Heart right ventricle (tissue), 16 donors: ENCODE measurements at regions of chr17 and their contacts with region 1.

Region 1: GRCh38 chr17:82320956-82321927 is 3.8 kb upstream of the CD7 start:
- DNase-seq: peak in 1 of 2 donors; percentile 56
- ATAC-seq: peak in 7 of 8 donors; percentile 10 to 58 (median 50)
- H3K4me3 ChIP-seq: peak overlapping the region in 2 of 10 donors; percentile 25 to 28
- H3K27ac ChIP-seq: peak overlapping the region in 1 of 10 donors; percentile 14
- H3K4me1 ChIP-seq: peaks cover 0 to 12% (median 4%) of the 10 kb centered on the region in 9 donors
- H3K27me3 ChIP-seq: peaks cover 0 to 21% (median 11%) of the 10 kb centered on the region in 7 donors
- CTCF ChIP-seq: peak; percentile 80 to 96 (median 89)

Region 2: DNA sequence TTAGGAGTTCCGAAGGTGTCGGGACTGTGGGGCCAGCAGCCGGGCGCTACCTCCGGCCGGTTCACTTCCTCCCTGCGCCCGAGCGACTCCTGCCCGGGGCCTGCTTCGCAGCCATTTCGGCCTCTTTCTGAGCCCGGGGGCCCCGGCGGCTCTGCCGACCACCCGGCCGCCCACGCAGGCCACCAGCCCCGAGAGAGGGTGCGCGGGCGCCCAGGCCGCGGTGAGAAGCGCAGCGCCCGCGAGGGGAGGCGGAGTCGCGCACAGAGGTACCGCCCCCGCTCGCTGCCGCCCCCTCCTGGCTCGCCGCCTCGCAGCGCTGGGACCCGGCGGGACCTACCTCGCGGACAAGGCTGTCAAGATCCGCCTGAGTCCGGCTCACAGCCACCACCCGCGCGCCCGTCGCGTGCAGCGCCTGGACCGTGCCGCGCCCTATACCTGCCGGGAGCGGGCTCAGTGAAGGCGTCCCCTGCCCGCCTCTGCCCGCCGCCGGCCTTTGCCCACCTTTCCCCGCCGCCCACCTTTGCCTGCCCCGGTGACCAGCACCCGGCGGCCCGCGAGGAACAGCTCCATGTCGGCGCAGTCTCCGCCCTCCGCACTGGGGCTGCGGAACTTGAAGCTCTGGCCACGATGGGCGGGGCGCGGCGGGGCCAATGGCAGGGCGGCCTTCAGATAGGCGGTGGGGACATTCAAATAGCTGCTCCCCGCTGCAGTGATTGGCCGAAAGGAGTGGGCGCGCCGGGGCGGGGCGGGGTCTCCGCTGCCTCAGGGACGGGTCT is 283.9 kb before region 1 on chr17 and contains the start of gene DCXR:
- intact Hi-C with region 1: loop called in 1 of 10 experiments (anchors 10 kb)
- DNase-seq: peak; percentile 97 to 98
- ATAC-seq: peak; percentile 95 to 99 (median 98)
- H3K4me3 ChIP-seq: peak within 1 kb of the TSS; percentile 58 to 82 (median 72)
- H3K27ac ChIP-seq: peak within 1 kb of the TSS; percentile 90 to 97 (median 94)
- H3K4me1 ChIP-seq: peaks cover 4 to 24% (median 18%) of the 10 kb centered on the region in 9 donors
- H3K27me3 ChIP-seq: peaks cover 0 to 5% (median 2%) of the 10 kb centered on the region in 7 donors
- CTCF ChIP-seq: peak; percentile 68 to 94 (median 86)
- total RNA-seq, gene DCXR: 155 to 258 (median 187) TPM

Region 3: GRCh38 chr17:82205719-82206508 is 115.3 kb before region 1 on chr17:
- intact Hi-C with region 1: loop called in 9 of 10 experiments (anchors 1 to 5 kb)
- DNase-seq: peak; percentile 80 to 81
- ATAC-seq: peak; percentile 68 to 90 (median 86)
- H3K4me3 ChIP-seq: peak overlapping the region in 6 of 10 donors; percentile 3 to 27 (median 13)
- H3K27ac ChIP-seq: peak overlapping the region in 8 of 10 donors; percentile 48 to 84 (median 72)
- H3K4me1 ChIP-seq: peaks cover 0 to 27% (median 11%) of the 10 kb centered on the region in 9 donors
- H3K27me3 ChIP-seq: no peaks in the 10 kb centered on the region
- CTCF ChIP-seq: peak; percentile 80 to 98 (median 92)

Region 4: DNA sequence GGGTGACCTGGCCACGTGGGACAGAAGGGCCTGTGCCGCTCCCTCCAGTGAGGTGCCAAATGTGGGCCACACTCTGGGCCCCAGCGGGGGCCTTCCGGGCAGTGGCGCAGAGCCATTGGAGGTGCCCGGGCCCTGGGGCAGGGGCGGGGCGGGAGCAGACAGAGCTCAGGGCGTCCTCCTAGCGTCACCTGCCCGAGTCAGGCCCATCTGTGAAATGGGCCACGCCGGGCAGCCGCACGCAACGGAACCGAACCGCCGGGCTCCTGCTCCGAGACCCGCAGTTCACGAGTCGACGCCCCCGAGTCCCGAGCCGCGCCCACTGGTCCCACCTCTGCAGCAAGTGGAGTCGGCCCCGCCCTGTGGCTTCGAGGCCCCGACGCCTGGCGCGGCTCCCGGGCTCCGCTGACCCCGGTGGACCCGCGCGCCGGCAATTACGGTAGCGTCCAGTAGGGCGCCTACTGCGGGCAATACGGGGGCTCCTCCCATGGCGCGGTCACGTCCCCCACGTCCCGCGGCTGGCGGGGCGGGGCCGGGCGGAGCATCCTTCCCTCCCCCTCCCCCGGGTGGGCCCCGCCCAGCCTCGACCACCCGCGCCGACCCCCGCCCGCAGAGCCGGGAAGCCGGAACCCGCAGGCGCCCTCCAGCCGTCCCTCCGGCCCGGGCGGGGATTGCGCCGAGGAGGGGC is 90.5 kb before region 1 on chr17:
- intact Hi-C with region 1: loop called in 7 of 10 experiments (anchors 5 to 10 kb)
- DNase-seq: peak; percentile 88 to 92
- ATAC-seq: peak; percentile 65 to 77 (median 74)
- H3K4me3 ChIP-seq: peak overlapping the region; percentile 46 to 88 (median 73)
- H3K27ac ChIP-seq: peak overlapping the region; percentile 85 to 100 (median 97)
- H3K4me1 ChIP-seq: peaks cover 16 to 83% (median 52%) of the 10 kb centered on the region in 9 donors
- H3K27me3 ChIP-seq: no peaks in the 10 kb centered on the region
- CTCF ChIP-seq: peak; percentile 47 to 77 (median 62)

Region 5: DNA sequence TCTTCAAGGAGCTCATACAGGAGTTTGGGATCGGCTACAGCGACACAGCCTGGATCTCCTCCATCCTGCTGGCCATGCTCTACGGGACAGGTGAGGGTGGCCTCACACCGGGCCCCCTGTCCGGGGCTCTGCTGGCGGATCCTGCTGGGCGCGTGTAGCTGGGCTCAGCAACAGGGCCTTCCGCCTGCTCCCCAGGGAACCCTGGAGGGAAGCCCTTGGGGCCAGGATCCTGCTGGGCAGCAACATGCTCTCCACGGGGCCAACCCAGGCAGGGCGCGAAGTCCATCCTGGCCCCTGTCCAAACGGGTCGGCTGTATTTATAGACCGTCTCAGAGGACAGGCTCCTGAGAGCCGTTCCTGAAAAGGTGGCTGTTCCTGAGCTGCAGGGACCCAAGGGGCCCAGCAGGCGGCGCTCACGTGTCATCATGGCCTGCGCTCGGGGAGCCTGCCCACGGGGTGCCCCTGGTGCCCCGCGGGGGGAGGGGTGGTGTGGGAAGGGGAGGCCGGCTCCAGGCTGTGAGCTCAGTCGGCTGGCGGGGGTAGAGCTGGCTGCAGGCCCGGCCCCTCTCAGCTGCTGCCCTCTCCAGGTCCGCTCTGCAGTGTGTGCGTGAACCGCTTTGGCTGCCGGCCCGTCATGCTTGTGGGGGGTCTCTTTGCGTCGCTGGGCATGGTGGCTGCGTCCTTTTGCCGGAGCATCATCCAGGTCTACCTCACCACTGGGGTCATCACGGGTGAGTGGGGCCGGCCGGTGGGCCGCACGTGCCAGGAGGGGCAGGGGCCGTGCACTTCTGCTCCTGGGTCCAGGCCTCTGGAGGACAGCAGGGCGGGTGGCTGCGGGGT is 84.9 kb before region 1 on chr17:
- intact Hi-C with region 1: loop called (anchors 2 to 10 kb)
- DNase-seq: peak in 1 of 2 donors; percentile 67
- ATAC-seq: peak in 5 of 8 donors; percentile 0 to 10 (median 4)
- H3K4me3 ChIP-seq: no peak overlapping the region
- H3K27ac ChIP-seq: peak overlapping the region in 2 of 10 donors; percentile 45 to 51
- H3K4me1 ChIP-seq: peaks cover 53 to 98% (median 63%) of the 10 kb centered on the region in 9 donors
- H3K27me3 ChIP-seq: no peaks in the 10 kb centered on the region
- CTCF ChIP-seq: peak; percentile 76 to 92 (median 87)

Region 6: GRCh38 chr17:82273327-82274133 is 47.7 kb before region 1 on chr17 and contains the start of gene CSNK1D:
- intact Hi-C with region 1: no loop called
- DNase-seq: peak; percentile 92 to 93
- ATAC-seq: peak; percentile 93 to 96 (median 94)
- H3K4me3 ChIP-seq: peak within 1 kb of the TSS; percentile 61 to 96 (median 88)
- H3K27ac ChIP-seq: peak within 1 kb of the TSS; percentile 86 to 100 (median 98)
- H3K4me1 ChIP-seq: peaks cover 14 to 52% (median 47%) of the 10 kb centered on the region in 9 donors
- H3K27me3 ChIP-seq: no peaks in the 10 kb centered on the region
- CTCF ChIP-seq: no peak
- total RNA-seq, gene CSNK1D: 56.8 to 72.7 (median 67.8) TPM

Region 7: DNA sequence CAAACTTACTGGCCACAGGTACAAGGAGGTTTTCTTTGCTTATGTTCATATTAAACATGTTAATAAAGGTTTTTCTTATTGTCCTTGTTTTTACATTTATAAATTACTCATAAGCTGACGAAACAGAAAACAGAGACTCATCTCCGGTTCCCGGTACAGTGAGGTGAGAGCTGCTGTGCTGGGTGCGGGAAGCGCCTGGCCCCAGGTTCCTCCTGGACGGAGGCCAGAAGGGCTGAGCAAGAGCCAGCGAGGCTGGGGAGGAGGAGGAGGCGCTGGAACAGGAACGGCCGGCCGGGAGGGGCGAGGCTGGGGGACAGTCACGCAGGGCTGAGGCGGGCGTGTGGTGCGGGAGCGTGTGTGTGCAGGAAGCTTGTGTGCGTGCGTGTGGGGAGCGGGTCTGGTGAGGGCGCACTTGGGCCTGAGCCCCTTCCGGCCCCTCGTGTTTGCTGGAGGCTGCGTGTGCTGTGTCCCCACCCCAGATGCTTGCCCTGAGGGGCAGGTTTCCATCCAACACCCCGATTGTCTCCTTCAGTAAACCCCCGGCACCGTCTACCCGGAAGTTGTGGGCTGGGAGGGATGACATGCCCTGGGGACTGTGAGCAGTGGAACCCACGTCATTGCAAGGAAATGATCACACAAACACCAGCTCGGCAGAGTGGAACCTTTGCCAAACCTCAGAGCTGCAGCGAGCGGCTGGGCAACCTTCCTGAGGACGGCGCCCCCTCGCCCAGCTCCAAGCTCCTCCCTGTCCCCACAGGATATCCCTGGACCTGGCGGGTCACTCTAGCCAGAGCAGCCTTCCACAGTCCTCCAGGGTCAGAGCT is 23.3 kb before region 1 on chr17:
- intact Hi-C with region 1: loop called in 1 of 10 experiments (anchors 2 kb)
- DNase-seq: peak; percentile 85 to 89
- ATAC-seq: peak; percentile 80 to 89 (median 85)
- H3K4me3 ChIP-seq: peak overlapping the region in 9 of 10 donors; percentile 31 to 57 (median 49)
- H3K27ac ChIP-seq: peak overlapping the region; percentile 66 to 99 (median 88)
- H3K4me1 ChIP-seq: peaks cover 11 to 87% (median 31%) of the 10 kb centered on the region in 9 donors
- H3K27me3 ChIP-seq: peaks cover 0 to 18% (median 0%) of the 10 kb centered on the region in 7 donors
- CTCF ChIP-seq: no peak